ENCODE measurements at regions of chr9 and their contacts with region 1.

Region 1: DNA sequence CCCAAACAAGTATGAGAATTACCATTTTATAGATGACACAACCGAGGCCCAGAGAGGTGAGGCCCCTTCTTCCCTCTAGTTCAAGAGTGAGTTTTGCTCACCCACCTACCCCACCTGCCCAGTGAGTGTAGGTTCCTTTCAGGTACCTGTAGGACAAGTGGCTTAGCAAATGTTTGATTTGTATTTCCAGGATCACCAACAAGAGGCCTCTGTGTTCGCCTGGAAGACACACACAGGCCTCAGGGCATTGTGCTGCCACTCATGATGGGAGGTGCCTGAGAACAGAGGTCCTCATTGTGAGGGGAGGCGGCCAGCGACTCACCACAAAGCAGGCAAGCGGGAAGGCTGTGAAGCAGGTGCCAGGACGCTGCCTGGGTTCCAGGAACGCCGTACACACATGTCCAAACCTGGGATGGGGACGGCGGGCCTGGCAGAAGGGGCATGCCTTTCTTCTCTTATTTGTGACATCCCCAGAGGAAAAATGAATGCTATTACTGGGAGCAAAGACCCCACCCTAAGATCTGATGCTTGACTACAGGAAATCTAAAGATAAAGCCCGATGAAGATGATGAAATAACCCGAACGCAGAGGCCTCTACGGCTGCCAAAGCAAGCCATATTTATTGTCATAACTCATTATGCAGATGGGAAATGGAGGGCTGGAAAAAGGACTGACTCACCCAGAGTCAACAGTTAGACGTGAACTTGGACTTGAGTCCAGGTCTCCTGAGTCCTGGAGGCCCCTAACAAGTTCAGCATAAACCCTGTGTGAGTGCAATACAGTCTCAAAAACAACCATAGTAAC is 60.2 kb upstream of the SLC25A51 start:
- DNase-seq: peak; percentile 71
- H3K4me3 Mint-ChIP-seq: peak overlapping the region; percentile 49
- H3K27ac Mint-ChIP-seq: peak overlapping the region; percentile 91
- H3K4me1 Mint-ChIP-seq: peaks cover 25% of the 10 kb centered on the region
- H3K27me3 Mint-ChIP-seq: no peaks in the 10 kb centered on the region
- CTCF ChIP-seq: no peak

Region 2: GRCh38 chr9:37776328-37776727 is 187.8 kb before region 1 on chr9:
- CTCF ChIA-PET with region 1: no interaction called
- intact Hi-C with region 1: no loop called
- DNase-seq: no peak
- H3K4me3 Mint-ChIP-seq: no peak overlapping the region
- H3K27ac Mint-ChIP-seq: no peak overlapping the region
- H3K4me1 Mint-ChIP-seq: no peaks in the 10 kb centered on the region
- H3K27me3 Mint-ChIP-seq: no peaks in the 10 kb centered on the region
- CTCF ChIP-seq: no peak

Region 3: DNA sequence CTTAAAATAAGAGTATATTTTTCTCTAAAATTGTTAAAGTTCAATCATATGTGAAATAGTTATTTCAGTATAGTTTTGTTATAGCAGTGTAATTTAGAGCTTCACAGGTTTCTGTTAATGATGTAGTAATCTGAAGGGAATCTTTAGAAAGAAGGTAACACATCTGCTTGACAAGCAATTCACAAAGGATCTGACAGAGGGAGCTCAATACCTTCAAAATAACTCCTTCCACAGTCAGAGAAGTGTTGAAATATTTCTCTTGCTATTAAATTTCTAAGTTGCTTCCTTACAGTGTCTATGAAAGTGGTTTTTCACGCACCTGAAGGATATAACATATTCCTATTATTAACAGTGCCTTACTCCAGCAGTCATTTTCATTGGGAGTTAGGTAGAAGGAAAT is 105.1 kb before region 1 on chr9:
- CTCF ChIA-PET with region 1: no interaction called
- intact Hi-C with region 1: no loop called
- DNase-seq: no peak
- H3K4me3 Mint-ChIP-seq: no peak overlapping the region
- H3K27ac Mint-ChIP-seq: no peak overlapping the region
- H3K4me1 Mint-ChIP-seq: no peaks in the 10 kb centered on the region
- H3K27me3 Mint-ChIP-seq: no peaks in the 10 kb centered on the region
- CTCF ChIP-seq: no peak

Region 4: DNA sequence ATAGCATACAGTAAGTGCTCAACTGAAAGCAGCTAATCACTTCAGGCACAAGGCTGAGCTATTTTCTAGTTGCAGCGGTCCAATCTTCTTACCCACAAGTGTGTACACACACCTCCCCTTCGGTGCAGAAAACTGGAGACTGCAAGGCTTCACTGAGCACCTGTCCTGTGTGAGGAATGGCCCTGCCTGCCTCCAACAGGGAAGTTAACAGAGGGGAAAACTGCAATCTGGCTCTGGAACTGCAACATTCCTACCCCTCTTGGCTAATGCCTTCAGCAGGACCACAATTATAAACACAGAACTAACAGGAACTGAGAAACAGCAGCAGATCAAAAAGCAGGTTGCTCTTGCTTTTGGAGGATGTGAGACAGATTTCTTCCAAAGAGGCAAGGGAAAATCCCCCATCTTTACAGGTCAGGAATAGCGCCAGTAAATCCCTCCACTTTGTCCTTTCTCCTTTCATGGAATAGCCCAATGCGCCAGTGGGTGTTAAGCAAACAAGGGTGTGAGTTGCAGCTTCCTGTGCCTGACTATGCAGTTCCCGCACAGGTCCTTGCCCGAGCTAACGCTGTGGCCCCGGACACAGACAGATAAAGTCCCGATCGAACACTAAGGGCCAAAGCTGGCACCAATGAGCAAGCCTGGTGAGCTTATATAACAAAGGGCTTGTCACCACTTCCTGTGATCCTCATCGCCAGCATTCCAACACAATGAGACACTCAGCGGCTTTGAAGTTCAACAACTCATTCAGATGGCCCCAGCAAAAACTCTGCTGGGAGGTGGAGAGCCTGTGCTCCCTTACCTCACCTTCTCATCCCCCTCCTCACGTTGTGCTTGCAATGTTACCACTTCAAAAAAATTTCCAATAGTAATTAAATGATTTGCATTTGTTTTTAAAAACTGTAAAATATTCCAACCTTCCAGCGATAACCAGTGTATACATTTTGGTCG is 83.4 kb after region 1 on chr9:
- CTCF ChIA-PET with region 1: no interaction called
- intact Hi-C with region 1: loop called (anchors 10 kb)
- DNase-seq: peak; percentile 66
- H3K4me3 Mint-ChIP-seq: peak overlapping the region; percentile 45
- H3K27ac Mint-ChIP-seq: peak overlapping the region; percentile 87
- H3K4me1 Mint-ChIP-seq: peaks cover 25% of the 10 kb centered on the region
- H3K27me3 Mint-ChIP-seq: no peaks in the 10 kb centered on the region
- CTCF ChIP-seq: no peak

Region 5: GRCh38 chr9:38227061-38227540 is 263.0 kb after region 1 on chr9:
- CTCF ChIA-PET with region 1: no interaction called
- intact Hi-C with region 1: no loop called
- DNase-seq: peak; percentile 81
- H3K4me3 Mint-ChIP-seq: peak overlapping the region; percentile 74
- H3K27ac Mint-ChIP-seq: peak overlapping the region; percentile 86
- H3K4me1 Mint-ChIP-seq: no peaks in the 10 kb centered on the region
- H3K27me3 Mint-ChIP-seq: no peaks in the 10 kb centered on the region
- CTCF ChIP-seq: no peak

Measured in Calu3 (cell line).